Ascending aorta (tissue), 2 donors: ENCODE measurements at regions of chr5 and their contacts with region 1.

Region 1: DNA sequence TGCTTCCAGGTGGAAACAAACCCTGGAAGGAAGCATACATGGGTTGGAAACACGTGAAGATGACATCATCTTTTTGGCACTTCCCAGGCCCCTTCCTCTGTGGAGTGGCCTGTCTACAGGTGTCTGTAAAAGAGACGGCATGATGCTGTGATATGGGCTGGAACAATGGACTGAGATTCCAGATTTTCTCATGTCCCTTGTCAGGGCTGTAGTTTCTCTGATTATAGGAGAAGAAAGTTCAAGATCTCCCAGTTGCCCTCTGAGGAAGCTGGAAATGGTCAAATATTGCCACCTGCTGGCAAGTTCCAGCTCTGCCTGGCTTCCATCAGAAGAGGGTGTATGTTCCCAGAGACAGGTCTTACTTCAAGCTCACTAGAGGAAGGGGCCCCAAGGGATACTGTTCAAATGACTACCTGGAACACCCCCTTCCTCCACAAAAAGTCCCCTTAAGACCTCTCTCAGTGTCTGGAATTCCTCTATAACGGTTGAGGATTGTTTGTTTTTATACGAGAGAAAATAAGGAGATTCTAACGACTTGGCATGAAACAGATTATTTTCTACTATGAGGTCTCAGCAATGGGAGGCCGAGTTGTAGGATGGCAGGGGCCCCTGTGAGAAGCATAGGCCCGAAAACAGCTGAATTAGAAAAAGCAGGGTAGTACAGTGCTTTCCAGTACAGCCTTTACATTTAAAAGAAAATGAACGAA is 7.3 kb upstream of the ANXA6 start:
- DNase-seq: peak; percentile 36 to 91
- H3K4me3 ChIP-seq: no peak overlapping the region
- H3K27ac ChIP-seq: no peak overlapping the region
- H3K4me1 ChIP-seq: peaks cover 3 to 8% of the 10 kb centered on the region in 2 donors
- H3K27me3 ChIP-seq: no peaks in the 10 kb centered on the region
- CTCF ChIP-seq: peak; percentile 81 to 87 (median 84)

Region 2: DNA sequence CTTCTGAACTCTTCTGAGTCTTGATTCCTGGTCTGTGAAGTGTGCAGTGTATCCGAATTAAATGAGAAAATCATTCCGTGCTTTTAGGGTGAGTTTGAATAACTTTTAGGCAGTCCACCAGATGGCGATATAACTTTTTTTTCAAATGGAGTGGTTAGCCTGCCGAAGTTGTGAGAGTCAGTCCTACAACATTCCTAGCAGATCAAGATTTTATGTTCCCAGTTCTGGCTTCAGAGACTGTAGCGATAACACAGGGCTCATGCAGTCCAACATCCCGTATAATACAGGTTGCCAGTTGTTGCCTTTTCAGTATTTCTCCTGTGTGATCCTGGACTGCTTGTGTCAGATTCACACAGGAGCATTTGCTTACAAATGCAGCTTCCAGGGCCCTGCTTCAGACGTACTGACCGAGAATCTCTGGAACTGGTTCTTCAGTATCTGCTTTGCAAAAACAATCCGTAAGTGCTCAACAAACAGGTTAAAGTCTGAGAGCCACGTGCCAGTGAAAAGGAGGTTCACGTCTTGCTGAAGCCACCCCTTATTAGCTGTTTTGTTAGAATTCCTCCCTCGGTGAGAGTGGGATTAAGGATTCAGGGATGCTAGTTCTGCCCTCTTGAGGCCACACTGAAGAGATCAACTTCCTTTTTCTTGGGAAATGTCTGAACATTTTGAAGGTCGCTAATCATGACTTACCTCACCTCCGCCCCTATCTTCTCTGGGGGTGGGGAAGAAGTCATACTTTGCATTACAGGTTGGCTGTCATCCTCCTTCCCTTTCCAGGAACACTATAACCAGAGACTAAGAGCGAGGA is 363.5 kb before region 1 on chr5:
- intact Hi-C with region 1: loop called (anchors 2 kb)
- DNase-seq: no peak
- H3K4me3 ChIP-seq: peak overlapping the region; percentile 55 to 58
- H3K27ac ChIP-seq: peak overlapping the region; percentile 52 to 57
- H3K4me1 ChIP-seq: peaks cover 0 to 3% of the 10 kb centered on the region in 2 donors
- H3K27me3 ChIP-seq: no peaks in the 10 kb centered on the region
- CTCF ChIP-seq: peak; percentile 11 to 61 (median 22)

Region 3: DNA sequence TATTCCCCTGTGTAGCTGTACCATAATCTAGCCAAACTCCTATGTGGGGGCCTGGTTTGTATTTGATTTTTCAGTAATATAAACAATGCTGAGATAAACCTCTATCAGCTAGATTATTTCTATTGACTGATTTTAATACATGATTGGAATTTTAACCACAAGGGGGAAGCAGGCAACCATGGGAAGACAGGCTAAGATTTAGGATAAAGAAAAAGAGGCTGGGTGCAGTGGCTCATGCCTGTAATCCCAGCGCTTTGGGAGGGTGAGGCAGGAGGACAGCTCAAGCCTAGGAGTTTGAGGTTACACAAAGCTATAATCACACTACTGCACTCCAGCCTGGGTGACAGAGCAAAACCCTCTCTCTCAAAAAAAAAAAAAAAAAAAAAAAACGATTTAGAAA is 162.6 kb before region 1 on chr5:
- intact Hi-C with region 1: loop called (anchors 2 kb)
- DNase-seq: no peak
- H3K4me3 ChIP-seq: no peak overlapping the region
- H3K27ac ChIP-seq: no peak overlapping the region
- H3K4me1 ChIP-seq: peaks cover 0 to 26% of the 10 kb centered on the region in 2 donors
- H3K27me3 ChIP-seq: no peaks in the 10 kb centered on the region
- CTCF ChIP-seq: peak; percentile 45 to 72 (median 56)

Region 4: DNA sequence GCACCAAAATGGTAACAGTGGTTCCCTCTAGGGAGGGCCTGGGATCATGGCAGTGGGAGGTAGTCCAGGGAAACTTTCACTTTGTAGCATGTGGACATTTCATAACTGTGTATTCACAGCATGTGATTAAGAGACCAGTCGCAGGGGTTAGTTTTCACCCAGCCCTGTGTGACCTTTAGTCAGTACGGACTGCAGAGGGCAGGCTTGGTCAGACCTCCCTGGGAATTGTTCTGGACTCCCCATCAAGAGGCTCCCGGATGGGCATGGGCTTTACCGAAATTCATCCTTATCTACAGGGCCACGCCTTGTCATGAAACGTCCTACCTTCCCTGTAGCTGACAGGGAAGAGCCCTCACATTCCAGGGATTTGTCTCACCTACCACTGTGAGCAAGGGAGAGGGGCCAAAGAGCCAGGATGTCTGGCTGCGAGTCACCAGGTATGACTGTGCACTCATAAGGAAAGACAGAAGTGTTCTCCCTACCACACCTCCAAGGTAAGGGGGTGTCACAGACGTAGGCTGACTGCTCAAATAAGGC is 124.6 kb before region 1 on chr5:
- intact Hi-C with region 1: no loop called
- DNase-seq: no peak
- H3K4me3 ChIP-seq: no peak overlapping the region
- H3K27ac ChIP-seq: peak overlapping the region in 1 of 2 donors; percentile 28
- H3K4me1 ChIP-seq: peaks cover 5 to 17% of the 10 kb centered on the region in 2 donors
- H3K27me3 ChIP-seq: no peaks in the 10 kb centered on the region
- CTCF ChIP-seq: no peak

Region 5: DNA sequence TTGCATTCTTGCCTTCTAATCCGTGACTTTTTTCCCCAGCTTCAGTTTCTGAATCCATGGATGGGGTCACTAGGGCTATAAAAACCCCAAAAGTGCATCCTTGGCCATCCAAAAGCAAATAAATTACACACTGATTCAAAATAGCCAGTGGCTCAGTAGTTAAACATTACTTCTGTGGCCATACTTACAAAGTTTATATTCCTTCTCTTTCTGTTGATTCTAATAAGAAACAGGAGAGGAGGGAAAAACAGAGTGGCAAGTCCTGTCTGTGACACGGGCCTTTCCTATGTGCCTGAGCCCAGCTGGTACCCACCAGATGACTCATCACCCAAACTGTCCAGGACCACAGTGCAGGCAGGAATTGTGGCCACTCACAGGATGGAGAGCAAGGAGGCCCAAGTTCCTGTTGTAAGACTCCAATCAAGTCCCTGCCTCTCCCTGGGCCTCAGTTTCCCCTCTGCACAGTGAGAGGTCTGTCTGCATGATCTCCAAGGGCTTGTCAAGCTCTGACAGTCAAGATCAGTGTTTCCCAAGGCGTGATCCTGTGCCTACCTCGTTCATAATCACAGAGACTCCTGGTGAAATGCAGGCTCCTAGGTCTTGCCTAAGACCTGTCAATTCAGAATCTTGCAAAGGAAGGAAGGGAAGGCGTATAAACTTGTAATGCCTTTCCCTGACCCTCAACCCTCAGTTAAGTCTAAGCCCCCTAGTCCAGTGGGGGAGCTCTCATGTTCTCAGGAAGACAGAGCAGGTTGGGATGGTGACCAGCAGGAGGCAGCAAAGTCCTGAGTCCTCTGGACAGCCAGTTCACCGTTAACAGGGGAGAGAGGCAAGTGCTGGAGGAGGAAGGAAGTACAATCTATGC is 113.5 kb before region 1 on chr5:
- intact Hi-C with region 1: loop called (anchors 1 kb)
- DNase-seq: peak in 1 of 2 donors; percentile 91
- H3K4me3 ChIP-seq: no peak overlapping the region
- H3K27ac ChIP-seq: no peak overlapping the region
- H3K4me1 ChIP-seq: peaks cover 0 to 6% of the 10 kb centered on the region in 2 donors
- H3K27me3 ChIP-seq: no peaks in the 10 kb centered on the region
- CTCF ChIP-seq: peak; percentile 80 to 87 (median 86)

Region 6: DNA sequence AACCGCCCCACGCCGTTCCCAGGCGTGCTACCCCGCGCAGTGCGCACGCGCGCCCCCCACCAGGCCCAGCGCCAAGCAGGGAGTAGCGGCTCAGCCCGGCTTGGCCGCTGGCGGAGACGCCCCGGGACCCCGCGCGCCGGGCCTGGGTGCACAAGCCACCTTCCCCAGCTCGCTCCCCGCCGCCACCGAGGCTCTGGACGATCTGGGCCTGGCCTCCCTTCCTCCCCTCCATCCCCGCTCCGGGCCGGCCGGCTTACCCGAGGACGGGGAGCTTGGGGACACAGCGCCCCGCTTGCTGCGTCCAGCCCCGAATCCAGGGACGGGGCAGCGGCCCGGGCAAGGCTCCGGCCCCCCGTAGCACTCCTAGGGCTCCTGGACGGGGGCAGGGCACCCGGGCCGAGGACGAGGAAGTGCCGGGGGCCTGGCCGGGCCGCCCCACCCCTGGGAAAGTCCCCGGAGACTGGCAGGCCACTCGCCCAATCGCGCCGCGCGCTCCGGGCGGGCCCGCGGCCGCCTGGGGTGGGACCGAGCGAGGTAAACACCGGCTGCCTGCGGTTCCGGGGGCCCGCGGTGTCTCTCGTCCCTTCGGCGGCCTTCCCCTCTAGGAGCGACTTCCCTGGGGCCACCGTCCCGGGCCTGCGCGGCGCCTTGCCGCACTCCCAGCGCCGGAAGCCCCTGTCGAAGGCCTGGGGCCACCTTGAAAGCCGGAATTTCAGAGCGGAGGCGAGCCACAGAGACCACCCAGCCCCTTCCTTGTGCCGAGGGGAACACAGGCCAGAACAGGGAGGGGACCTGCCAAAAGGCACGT is 84.0 kb before region 1 on chr5 and contains the start of gene TNIP1:
- intact Hi-C with region 1: no loop called
- DNase-seq: peak; percentile 72 to 96
- H3K4me3 ChIP-seq: peak within 1 kb of the TSS; percentile 75 to 91
- H3K27ac ChIP-seq: peak within 1 kb of the TSS; percentile 94 to 97
- H3K4me1 ChIP-seq: peaks cover 7 to 30% of the 10 kb centered on the region in 2 donors
- H3K27me3 ChIP-seq: no peaks in the 10 kb centered on the region
- CTCF ChIP-seq: no peak
- total RNA-seq, gene TNIP1: 54.6 TPM

Region 7: GRCh38 chr5:151126199-151126645 is 38.6 kb before region 1 on chr5:
- intact Hi-C with region 1: loop called (anchors 1 kb)
- DNase-seq: peak in 1 of 2 donors; percentile 82
- H3K4me3 ChIP-seq: no peak overlapping the region
- H3K27ac ChIP-seq: no peak overlapping the region
- H3K4me1 ChIP-seq: peaks cover 0 to 11% of the 10 kb centered on the region in 2 donors
- H3K27me3 ChIP-seq: no peaks in the 10 kb centered on the region
- CTCF ChIP-seq: peak; percentile 69 to 78 (median 78)

Region 8: GRCh38 chr5:151239237-151239861 is 74.5 kb after region 1 on chr5:
- intact Hi-C with region 1: loop called (anchors 5 kb)
- DNase-seq: peak in 1 of 2 donors; percentile 90
- H3K4me3 ChIP-seq: peak overlapping the region; percentile 37 to 45
- H3K27ac ChIP-seq: peak overlapping the region; percentile 48 to 53
- H3K4me1 ChIP-seq: peaks cover 0 to 4% of the 10 kb centered on the region in 2 donors
- H3K27me3 ChIP-seq: no peaks in the 10 kb centered on the region
- CTCF ChIP-seq: peak; percentile 72 to 92 (median 74)